ENCODE measurements at regions of chr20 and their contacts with region 1.

Region 1: DNA sequence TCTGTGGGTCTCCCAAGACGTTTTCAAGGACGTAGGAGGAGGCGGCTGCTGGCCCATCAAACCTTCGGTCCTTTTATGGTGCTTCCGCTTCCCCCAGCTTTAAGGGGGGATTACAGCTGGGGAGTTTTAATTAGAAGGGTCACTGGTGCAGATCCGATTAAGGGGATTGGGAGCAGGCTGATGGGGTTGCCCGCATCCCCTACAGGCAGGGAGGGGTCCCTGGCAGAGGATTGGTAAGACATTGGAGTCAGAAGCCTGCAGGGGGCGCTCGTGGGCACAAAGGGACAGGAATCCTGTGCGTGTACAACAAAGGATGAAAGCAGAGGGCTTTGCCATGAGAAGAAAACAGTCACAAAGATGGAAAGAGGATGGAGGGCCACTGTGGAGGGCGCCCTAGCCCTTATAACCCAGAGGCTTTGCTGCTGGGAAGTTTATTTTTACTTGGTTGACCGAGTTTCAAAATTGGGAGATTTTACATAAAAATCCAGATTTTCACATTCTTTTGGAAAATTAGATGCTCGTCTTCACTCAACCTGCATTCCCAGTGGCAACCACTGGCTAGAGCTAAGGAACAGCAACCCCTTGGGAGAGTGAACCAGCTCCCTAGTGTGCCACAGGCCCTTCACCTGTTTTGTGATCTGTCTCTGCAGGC is 97.9 kb downstream of the KCNB1 start:
- H3K4me3 ChIP-seq: no peak overlapping the region
- H3K27ac ChIP-seq: no peak overlapping the region
- H3K4me1 ChIP-seq: 0 out of 2 replicates have a peak, but pooled peaks cover 3% of the 10 kb centered on the region
- CTCF ChIP-seq: peak; percentile 60

Region 2: DNA sequence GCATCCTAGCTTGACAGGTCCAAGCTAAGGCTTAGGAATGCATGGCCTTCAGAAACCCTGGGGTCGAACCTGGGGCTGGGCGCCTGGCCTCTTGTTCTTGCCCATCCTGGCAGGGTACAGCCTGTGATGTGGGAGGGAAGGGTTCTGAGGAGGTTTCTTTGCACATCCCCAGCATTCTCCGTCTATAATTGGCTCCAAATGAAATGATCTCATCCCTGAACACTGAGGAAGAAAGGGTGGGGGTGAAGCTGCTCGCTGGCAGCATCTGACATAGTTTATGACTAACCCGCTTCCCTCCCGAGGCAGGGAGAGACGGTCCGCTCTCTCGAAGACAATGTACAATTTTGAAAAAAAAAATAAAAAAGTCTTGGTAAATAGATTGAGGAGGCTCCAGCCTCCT is 39.6 kb before region 1 on chr20:
- CTCF ChIA-PET with region 1: interaction called, 11 read pairs
- POLR2A ChIA-PET with region 1: no interaction called
- H3K4me3 ChIP-seq: peak overlapping the region; percentile 8; the same call in 1 of the 2 replicates
- H3K27ac ChIP-seq: no peak overlapping the region
- H3K4me1 ChIP-seq: no peaks in the 10 kb centered on the region; the same call in 1 of the 2 replicates
- CTCF ChIP-seq: no peak

Region 3: DNA sequence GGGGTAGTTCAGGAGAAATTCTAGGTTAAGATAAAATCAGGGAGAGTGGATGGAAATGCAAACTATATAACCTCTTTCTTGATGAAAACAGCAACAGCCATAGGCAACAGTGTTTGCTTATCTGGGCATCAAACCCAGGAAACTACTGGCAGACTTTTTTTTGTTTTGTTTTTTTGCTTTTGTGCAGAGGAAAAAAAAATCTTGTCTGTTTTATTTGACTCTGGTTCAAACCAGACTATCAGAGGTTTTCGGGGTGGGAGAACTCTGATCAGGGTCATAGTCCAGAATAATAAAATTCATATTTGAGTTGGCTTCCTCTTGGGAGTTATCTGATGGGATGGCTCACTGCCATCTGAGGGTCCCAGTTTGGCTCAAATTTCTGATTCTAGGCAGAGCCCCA is 17.9 kb before region 1 on chr20:
- CTCF ChIA-PET with region 1: interaction called, 14 read pairs
- POLR2A ChIA-PET with region 1: no interaction called
- H3K4me3 ChIP-seq: no peak overlapping the region
- H3K27ac ChIP-seq: no peak overlapping the region
- H3K4me1 ChIP-seq: no peaks in the 10 kb centered on the region
- CTCF ChIP-seq: no peak

Region 4: DNA sequence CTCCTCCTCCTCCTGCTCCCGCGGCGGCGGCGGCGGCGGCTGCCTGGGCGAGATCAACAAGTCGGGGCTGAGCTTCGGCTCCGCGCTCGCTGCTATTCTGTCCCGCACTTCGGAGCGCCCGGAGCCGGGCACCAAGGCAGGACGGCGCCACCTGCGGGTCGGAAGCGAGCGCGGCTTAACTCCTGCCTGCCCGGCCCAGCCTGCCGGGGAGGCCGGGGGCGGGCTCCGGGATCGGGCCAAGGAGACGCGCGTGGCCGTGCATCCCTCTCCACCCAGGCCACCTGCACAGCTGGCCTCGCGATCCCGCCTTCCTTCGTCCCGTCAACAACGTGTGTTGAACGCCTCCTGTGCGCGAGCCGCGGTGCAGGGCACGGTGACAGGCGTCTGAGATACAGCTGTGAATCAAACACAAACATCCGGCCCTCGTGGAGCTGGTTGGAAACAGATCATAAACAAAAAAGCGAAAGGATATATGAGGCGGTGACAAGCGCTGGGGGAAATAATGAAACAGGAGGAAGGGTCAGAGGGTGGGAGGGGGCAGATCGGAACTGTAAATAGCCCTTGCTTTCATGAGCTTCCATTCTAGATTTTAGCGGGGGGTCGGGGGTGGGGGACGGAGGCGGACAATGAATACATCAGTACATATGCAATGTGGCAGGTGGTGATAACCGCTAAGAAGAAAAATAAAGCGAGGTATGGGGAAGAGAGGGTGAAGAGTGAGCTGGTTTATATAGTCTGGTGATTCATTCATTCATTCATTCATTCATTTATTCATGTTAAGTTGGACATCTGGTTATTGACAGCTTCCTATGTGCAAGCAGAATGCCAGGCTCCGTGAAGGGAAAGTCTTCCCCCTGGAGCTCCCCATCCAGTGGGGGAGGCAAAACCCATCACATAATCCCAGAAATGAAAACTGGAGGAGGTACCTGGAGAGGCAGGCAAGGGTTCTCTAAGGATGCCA is 99.9 kb after region 1 on chr20:
- CTCF ChIA-PET with region 1: interaction called, 14 read pairs
- POLR2A ChIA-PET with region 1: no interaction called
- H3K4me3 ChIP-seq: peak overlapping the region; percentile 53
- H3K27ac ChIP-seq: no peak overlapping the region
- H3K4me1 ChIP-seq: 0 out of 2 replicates have a peak, but pooled peaks cover 4% of the 10 kb centered on the region
- CTCF ChIP-seq: peak; percentile 95

Measured in HEK293 (cell line).